ENCODE measurements at regions of chr3 and their contacts with region 1.

Region 1: GRCh38 chr3:195154793-195155535 is 116.0 kb downstream of the XXYLT1 start:
- DNase-seq: peak; percentile 100
- H3K4me3 ChIP-seq: no peak overlapping the region
- H3K27ac ChIP-seq: peak overlapping the region; percentile 95
- H3K4me1 ChIP-seq: peaks cover 86% of the 10 kb centered on the region
- H3K27me3 ChIP-seq: no peaks in the 10 kb centered on the region
- CTCF ChIP-seq: no peak
- POLR2A ChIP-seq: peak; percentile 80

Region 2: GRCh38 chr3:194671900-194672808 is 482.8 kb before region 1 on chr3 and contains the start of gene LSG1:
- CTCF ChIA-PET with region 1: interaction called, 8 read pairs
- POLR2A ChIA-PET with region 1: no interaction called
- dilution Hi-C with region 1: no loop called
- intact Hi-C with region 1: loop called (anchors 1 kb)
- DNase-seq: peak; percentile 96
- H3K4me3 ChIP-seq: peak within 1 kb of the TSS; percentile 61 to 97 (median 64)
- H3K27ac ChIP-seq: peak within 1 kb of the TSS; percentile 93
- H3K4me1 ChIP-seq: peaks cover 15% of the 10 kb centered on the region
- H3K27me3 ChIP-seq: peaks cover 0 to 2% of the 10 kb centered on the region in 2 experiments
- CTCF ChIP-seq: no peak
- POLR2A ChIP-seq: peak; percentile 80
- total RNA-seq, gene LSG1: 48.3 and 52.7 TPM in 2 replicates

Region 3: GRCh38 chr3:194871143-194871863 is 283.7 kb before region 1 on chr3:
- CTCF ChIA-PET with region 1: no interaction called
- POLR2A ChIA-PET with region 1: no interaction called
- dilution Hi-C with region 1: no loop called
- intact Hi-C with region 1: loop called (anchors 2 kb)
- DNase-seq: peak; percentile 71
- H3K4me3 ChIP-seq: no peak overlapping the region
- H3K27ac ChIP-seq: peak overlapping the region; percentile 73
- H3K4me1 ChIP-seq: peaks cover 50% of the 10 kb centered on the region
- H3K27me3 ChIP-seq: no peaks in the 10 kb centered on the region
- CTCF ChIP-seq: no peak
- POLR2A ChIP-seq: no peak

Region 4: DNA sequence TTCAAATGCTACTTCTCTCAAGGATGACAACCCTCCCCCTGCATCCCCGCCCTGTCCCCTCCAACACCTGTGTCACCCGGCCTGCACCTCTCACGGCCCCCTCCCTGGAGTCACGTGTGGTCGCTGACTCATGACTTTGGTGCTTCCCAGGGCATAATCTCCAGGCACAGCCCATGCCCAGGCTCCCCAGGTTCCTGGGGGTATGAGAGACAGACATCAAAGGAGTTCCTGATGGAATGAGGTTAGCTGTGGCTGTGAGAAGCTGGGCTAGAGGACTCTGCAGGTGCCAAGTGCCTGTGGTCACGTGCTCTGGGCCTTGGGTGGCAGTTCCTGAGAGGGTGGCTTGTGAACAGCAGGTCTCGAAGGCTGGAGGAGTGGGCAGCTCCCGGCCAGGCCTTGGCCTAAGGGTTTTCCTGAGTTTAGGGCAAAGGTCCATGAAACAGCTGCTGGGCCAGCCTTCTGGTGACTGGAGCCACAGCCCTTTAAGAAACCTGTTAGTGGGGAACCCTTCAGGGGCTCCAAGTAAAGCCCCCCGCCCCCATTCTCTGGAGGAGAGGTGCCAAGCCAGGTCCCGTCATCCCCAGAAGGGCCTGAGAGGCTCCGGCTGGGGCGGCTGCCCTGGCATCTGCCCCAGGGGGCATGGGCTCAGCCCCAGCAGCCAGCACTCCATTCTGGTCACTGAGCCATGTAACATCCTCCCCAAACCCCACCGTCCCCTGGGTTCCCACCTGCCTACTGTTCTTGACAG is 114.0 kb before region 1 on chr3:
- CTCF ChIA-PET with region 1: no interaction called
- POLR2A ChIA-PET with region 1: no interaction called
- dilution Hi-C with region 1: no loop called
- intact Hi-C with region 1: no loop called
- DNase-seq: no peak
- H3K4me3 ChIP-seq: no peak overlapping the region
- H3K27ac ChIP-seq: no peak overlapping the region
- H3K4me1 ChIP-seq: peaks cover 5% of the 10 kb centered on the region
- H3K27me3 ChIP-seq: no peaks in the 10 kb centered on the region
- CTCF ChIP-seq: no peak
- POLR2A ChIP-seq: no peak

Region 5: GRCh38 chr3:195140816-195141793 is 13.9 kb before region 1 on chr3:
- CTCF ChIA-PET with region 1: interaction called, 4 read pairs
- POLR2A ChIA-PET with region 1: interaction called, 4 read pairs
- dilution Hi-C with region 1: no loop called
- intact Hi-C with region 1: loop called (anchors 1 kb)
- DNase-seq: peak; percentile 92
- H3K4me3 ChIP-seq: no peak overlapping the region
- H3K27ac ChIP-seq: peak overlapping the region; percentile 92
- H3K4me1 ChIP-seq: peaks cover 27% of the 10 kb centered on the region
- H3K27me3 ChIP-seq: no peaks in the 10 kb centered on the region
- CTCF ChIP-seq: no peak
- POLR2A ChIP-seq: peak; percentile 67

Region 6: DNA sequence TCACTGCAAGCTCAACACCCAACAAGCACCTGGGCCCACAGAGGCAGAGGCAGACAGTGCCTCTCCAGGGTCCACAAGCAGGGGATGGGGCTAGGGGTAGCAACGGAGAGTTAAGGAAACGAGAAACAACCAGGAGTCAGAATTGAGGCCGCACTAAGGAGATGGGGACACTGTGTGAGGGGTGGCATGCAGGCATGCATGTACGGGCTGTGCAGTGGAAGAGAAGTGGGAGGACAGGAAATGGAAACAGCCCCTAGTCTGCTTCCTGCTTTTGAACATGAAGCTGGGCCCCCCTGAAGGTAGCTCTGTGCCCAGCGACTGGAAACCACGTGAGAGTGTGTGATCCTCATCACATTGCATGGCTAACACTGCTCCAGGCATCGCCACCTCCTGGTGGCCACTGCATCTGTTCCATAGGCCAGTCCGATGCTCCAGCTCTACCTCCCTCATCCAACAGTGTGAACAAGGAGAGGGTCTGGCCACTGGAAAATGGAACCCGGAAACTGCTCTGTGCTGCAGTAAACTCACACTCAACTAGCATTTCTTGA is 72.0 kb after region 1 on chr3:
- CTCF ChIA-PET with region 1: interaction called, 6 read pairs
- POLR2A ChIA-PET with region 1: no interaction called
- dilution Hi-C with region 1: no loop called
- intact Hi-C with region 1: loop called (anchors 1 kb)
- DNase-seq: peak; percentile 46
- H3K4me3 ChIP-seq: no peak overlapping the region
- H3K27ac ChIP-seq: no peak overlapping the region
- H3K4me1 ChIP-seq: peaks cover 28% of the 10 kb centered on the region
- H3K27me3 ChIP-seq: no peaks in the 10 kb centered on the region
- CTCF ChIP-seq: peak; percentile 44 to 63
- POLR2A ChIP-seq: no peak